Activated CD4-positive, alpha-beta memory T cell treated with anti-CD3 and anti-CD28 coated beads, Interleukin-2, amount 10 ng/mL, durations not matched to agents 7 days and 5 days (primary cell): ENCODE measurements at regions of chr12 and their contacts with region 1.

Region 1: DNA sequence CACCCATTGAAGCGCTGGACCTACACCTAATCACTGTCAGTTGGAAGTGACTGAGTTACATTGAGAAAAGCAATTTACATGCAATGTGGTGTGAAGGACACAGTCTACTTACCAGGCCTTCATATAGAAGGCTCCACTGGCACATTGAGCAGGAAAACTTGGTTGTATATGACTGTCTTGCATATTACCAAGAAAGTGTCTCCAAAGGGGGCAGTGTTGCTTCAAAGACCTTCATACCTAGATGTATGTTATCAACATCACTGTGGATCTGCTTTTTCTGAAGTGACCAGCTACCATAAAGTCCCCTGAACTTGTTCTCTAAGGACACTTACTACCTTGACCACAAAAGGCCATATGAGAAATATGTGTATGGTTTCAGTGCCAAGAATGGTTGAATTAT is 64.1 kb downstream of the NELL2 start:
- DNase-seq: peak; percentile 46
- H3K4me3 Mint-ChIP-seq: no peak overlapping the region
- H3K27ac Mint-ChIP-seq: no peak overlapping the region
- H3K4me1 Mint-ChIP-seq: peaks cover 2% of the 10 kb centered on the region
- H3K27me3 Mint-ChIP-seq: no peaks in the 10 kb centered on the region

Region 2: GRCh38 chr12:44738051-44738450 is 74.0 kb before region 1 on chr12:
- CTCF ChIA-PET with region 1: no interaction called
- POLR2A ChIA-PET with region 1: no interaction called
- DNase-seq: no peak
- H3K4me3 Mint-ChIP-seq: no peak overlapping the region
- H3K27ac Mint-ChIP-seq: no peak overlapping the region
- H3K4me1 Mint-ChIP-seq: no peaks in the 10 kb centered on the region
- H3K27me3 Mint-ChIP-seq: no peaks in the 10 kb centered on the region

Region 3: GRCh38 chr12:44847403-44847802 is 35.3 kb after region 1 on chr12:
- CTCF ChIA-PET with region 1: no interaction called
- POLR2A ChIA-PET with region 1: no interaction called
- DNase-seq: no peak
- H3K4me3 Mint-ChIP-seq: peak overlapping the region; percentile 55
- H3K27ac Mint-ChIP-seq: peak overlapping the region; percentile 98
- H3K4me1 Mint-ChIP-seq: peaks cover 70% of the 10 kb centered on the region
- H3K27me3 Mint-ChIP-seq: no peaks in the 10 kb centered on the region

Region 4: GRCh38 chr12:44875954-44876553 is 64.0 kb after region 1 on chr12 and contains the start of gene NELL2:
- CTCF ChIA-PET with region 1: interaction called, 58 read pairs
- POLR2A ChIA-PET with region 1: no interaction called
- DNase-seq: peak; percentile 66
- H3K4me3 Mint-ChIP-seq: peak within 1 kb of the TSS; percentile 82
- H3K27ac Mint-ChIP-seq: peak within 1 kb of the TSS; percentile 9
- H3K4me1 Mint-ChIP-seq: peaks cover 31% of the 10 kb centered on the region
- H3K27me3 Mint-ChIP-seq: peaks cover 21% of the 10 kb centered on the region
- total RNA-seq, gene NELL2: 10.1 to 10.5 TPM

Region 5: GRCh38 chr12:44930972-44931600 is 119.0 kb after region 1 on chr12:
- CTCF ChIA-PET with region 1: interaction called, 16 read pairs
- POLR2A ChIA-PET with region 1: no interaction called
- DNase-seq: no peak
- H3K4me3 Mint-ChIP-seq: no peak overlapping the region
- H3K27ac Mint-ChIP-seq: no peak overlapping the region
- H3K4me1 Mint-ChIP-seq: no peaks in the 10 kb centered on the region
- H3K27me3 Mint-ChIP-seq: no peaks in the 10 kb centered on the region

Region 6: DNA sequence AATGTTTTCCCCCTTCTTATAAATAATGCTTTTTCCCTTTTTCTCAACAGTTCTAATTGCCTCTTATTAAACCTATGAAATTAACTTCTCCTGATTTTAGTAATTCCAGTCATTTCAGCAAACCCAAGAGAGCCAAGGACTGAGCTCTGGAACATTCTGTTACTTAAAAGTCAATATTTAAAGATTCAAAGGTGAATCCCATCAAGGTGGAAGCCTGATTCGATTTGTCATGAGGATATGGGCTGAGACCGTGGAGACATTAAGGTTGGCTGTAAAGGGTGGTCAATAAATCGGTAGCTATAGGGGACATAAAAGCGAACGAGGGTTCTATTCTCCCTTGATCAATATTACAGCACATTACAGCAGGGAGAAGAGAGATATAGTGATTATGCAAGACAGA is 130.7 kb after region 1 on chr12:
- CTCF ChIA-PET with region 1: interaction called, 11 read pairs
- POLR2A ChIA-PET with region 1: no interaction called
- DNase-seq: no peak
- H3K4me3 Mint-ChIP-seq: no peak overlapping the region
- H3K27ac Mint-ChIP-seq: no peak overlapping the region
- H3K4me1 Mint-ChIP-seq: no peaks in the 10 kb centered on the region
- H3K27me3 Mint-ChIP-seq: peaks cover 13% of the 10 kb centered on the region